Right ventricle myocardium superior (tissue), 1 donor: ENCODE measurements at regions of chr1 and their contacts with region 1.

Region 1: GRCh38 chr1:21508580-21509350 is 458 bp upstream of the ALPL start:
- DNase-seq: peak; percentile 86
- ATAC-seq: peak; percentile 86

Region 2: DNA sequence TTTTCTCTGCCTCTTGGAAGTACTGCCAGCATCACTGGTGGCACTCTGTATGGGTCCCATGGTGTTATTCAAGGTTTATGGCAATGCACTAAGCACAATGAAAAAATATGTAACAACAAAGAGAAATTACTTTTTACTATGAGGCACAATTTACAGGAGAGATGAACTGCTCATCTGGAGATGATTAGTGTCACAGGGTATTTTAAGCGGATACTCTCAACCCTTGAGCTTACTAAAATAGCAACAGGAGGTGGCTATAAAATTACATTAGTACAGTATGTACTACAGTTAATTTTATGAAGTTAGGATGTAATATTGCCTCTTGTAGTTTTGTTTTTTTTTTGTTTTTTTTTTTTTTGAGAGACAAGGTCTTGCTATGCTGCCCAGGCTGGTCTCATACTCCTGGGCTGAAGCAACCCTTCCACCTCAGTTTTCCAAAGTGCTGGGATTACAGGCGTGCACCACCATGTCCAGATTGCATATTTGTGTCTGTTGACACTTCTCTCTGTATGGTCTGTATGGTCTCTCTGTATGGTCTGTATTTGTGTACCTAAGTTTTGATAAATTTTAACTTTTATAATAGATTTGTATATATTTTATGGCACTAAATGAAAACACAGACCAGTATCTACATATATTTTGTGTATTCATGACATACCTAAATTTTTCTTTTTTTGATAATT is 546.0 kb before region 1 on chr1:
- intact Hi-C with region 1: no loop called
- DNase-seq: no peak
- ATAC-seq: peak; percentile 79

Region 3: DNA sequence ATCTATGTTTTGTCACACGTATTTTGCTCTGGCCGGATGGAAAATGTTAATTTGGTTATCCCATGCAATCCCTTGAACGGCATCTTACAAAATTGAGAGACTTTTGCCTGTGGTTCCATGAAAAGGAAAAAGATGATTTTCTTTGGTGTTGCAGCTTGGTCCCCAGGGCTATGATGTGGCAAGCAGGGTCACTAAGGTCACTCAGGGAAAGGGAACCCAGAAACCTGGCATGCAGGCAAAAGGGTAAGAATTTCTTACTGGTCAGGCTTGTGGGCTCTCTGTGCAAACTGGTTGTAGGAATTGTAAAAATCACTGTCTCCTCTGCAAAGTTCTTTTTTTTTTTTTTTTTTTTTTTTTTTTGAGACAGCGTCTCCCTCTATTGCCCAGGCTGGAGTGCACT is 117.3 kb before region 1 on chr1:
- intact Hi-C with region 1: no loop called
- DNase-seq: no peak
- ATAC-seq: no peak

Region 4: DNA sequence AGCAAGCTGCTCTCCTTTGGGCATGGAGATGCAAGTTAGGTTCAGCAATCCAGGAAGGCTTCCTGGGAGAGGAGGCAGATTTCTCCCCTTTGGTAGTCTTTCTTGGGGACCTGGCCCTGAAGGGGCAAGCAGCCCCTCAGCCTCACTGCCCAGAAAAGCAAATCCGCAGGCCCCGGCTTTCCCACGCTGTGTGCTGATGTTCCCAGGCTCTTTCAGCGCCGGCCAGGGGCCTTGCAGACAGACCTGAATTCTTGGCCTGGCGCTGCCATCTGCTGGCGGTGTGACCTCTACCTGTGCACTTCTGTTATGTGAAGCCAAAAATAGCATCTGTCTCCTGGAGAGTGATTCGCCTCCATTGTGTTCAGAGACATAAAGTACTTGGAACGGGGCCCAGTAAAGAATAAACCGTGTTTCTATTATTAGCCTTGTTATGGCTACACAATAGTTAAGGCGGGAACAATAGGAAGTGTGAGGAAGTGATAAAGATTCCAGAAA is 65.3 kb after region 1 on chr1:
- intact Hi-C with region 1: loop called (anchors 2 kb)
- DNase-seq: peak; percentile 92
- ATAC-seq: peak; percentile 95

Region 5: DNA sequence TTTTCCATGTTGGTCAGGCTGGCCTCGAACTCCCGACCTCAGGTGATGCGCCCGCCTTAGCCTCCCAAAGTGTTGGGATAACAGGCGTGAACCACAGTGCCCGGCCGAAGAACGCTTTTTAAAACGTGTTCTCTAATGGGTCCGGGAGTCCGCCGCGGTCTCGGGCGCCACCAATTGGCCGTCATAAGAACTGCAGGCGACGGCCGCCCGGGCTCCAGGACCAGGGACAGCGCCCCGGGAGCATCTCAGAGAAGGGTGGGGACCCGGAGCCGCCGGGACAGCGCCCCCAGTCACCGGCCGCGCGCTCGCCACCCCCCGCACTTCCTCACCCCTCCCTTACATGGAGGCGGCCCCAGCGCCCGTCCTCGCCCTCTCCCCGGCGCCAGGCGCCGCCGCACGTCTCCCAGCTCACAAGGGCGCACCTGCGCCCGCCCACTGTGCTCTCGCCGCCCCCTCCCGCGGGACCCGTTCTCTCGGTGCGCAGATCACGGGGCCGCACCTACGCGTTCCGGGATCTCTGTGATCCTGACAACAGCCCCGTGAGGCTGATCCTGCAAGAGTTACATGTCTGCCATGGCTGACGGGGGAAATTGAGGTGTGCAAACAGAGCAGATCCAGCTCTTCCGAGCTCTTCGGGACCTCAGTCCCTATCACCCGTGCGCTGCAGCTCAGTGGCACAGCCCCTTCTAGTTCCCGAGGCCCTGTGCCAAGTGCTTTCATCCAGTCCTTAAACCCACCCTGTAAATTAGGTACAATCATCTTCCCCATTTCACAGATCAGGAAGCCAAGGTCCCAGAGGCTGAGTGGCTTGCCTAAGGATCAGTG is 150.5 kb after region 1 on chr1:
- intact Hi-C with region 1: loop called (anchors 10 kb)
- DNase-seq: peak; percentile 88
- ATAC-seq: peak; percentile 81